CD14-positive monocyte (primary cell): ENCODE measurements at regions of chr3 and their contacts with region 1.

Region 1: DNA sequence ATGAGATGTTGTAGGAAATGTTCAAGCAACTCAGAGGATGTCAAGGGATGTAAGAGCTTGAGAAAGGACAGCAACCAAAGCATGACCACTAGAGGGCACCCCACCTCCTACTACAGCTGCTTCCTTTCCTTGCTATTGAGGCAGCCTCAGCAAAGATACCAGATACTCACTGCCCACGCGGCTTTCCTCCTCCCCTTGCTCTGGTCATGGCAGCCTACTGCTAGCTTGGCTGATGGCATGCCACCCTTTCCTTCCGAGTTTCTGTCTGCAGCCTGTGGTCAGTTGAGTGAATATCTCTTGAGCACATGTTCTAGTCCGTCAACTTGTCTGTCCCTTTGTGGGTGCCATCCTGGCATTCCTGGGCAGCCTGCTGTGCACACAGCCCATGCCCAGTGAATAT is 4.4 kb upstream of the CXCR6 start:
- DNase-seq: peak; percentile 77 to 85 (median 85)
- H3K4me3 ChIP-seq: no peak overlapping the region
- H3K4me3 Mint-ChIP-seq: no peak overlapping the region
- H3K27ac ChIP-seq: no peak overlapping the region
- H3K27ac Mint-ChIP-seq: no peak overlapping the region
- H3K4me1 ChIP-seq: peaks cover 0 to 2% of the 10 kb centered on the region in 2 donors
- H3K4me1 Mint-ChIP-seq: peaks cover 4% of the 10 kb centered on the region
- H3K27me3 ChIP-seq: no peaks in the 10 kb centered on the region
- H3K27me3 Mint-ChIP-seq: no peaks in the 10 kb centered on the region
- CTCF ChIP-seq: peak; percentile 88

Region 2: GRCh38 chr3:45817831-45818522 is 120.9 kb before region 1 on chr3:
- intact Hi-C with region 1: no loop called
- DNase-seq: no peak
- H3K4me3 ChIP-seq: no peak overlapping the region
- H3K4me3 Mint-ChIP-seq: no peak overlapping the region
- H3K27ac ChIP-seq: no peak overlapping the region
- H3K27ac Mint-ChIP-seq: no peak overlapping the region
- H3K4me1 ChIP-seq: no peaks in the 10 kb centered on the region
- H3K4me1 Mint-ChIP-seq: no peaks in the 10 kb centered on the region
- H3K27me3 ChIP-seq: no peaks in the 10 kb centered on the region
- H3K27me3 Mint-ChIP-seq: no peaks in the 10 kb centered on the region
- CTCF ChIP-seq: no peak

Region 3: GRCh38 chr3:46078712-46079400 is 140.0 kb after region 1 on chr3:
- intact Hi-C with region 1: loop called (anchors 2 kb)
- DNase-seq: peak; percentile 83 to 90 (median 89)
- H3K4me3 ChIP-seq: no peak overlapping the region
- H3K4me3 Mint-ChIP-seq: peak overlapping the region in 1 of 2 donors; percentile 76
- H3K27ac ChIP-seq: peak overlapping the region in 1 of 2 donors; percentile 12
- H3K27ac Mint-ChIP-seq: peak overlapping the region in 6 of 7 donors; percentile 11 to 65 (median 53)
- H3K4me1 ChIP-seq: peaks cover 3 to 7% of the 10 kb centered on the region in 2 donors
- H3K4me1 Mint-ChIP-seq: peaks cover 18% of the 10 kb centered on the region
- H3K27me3 ChIP-seq: no peaks in the 10 kb centered on the region
- H3K27me3 Mint-ChIP-seq: peaks cover 0 to 3% (median 0%) of the 10 kb centered on the region in 3 donors
- CTCF ChIP-seq: peak; percentile 99

Region 4: GRCh38 chr3:46228259-46229242 is 289.7 kb after region 1 on chr3:
- intact Hi-C with region 1: loop called in 1 of 2 experiments (anchors 10 kb)
- DNase-seq: peak; percentile 67 to 77 (median 69)
- H3K4me3 ChIP-seq: peak overlapping the region in 1 of 3 experiments; percentile 17
- H3K4me3 Mint-ChIP-seq: peak overlapping the region in 1 of 2 donors; percentile 44
- H3K27ac ChIP-seq: peak overlapping the region in 1 of 2 donors; percentile 30
- H3K27ac Mint-ChIP-seq: peak overlapping the region in 6 of 7 donors; percentile 15 to 88 (median 66)
- H3K4me1 ChIP-seq: peaks cover 28 to 33% of the 10 kb centered on the region in 2 donors
- H3K4me1 Mint-ChIP-seq: peaks cover 32% of the 10 kb centered on the region
- H3K27me3 ChIP-seq: no peaks in the 10 kb centered on the region
- H3K27me3 Mint-ChIP-seq: peaks cover 0 to 10% (median 0%) of the 10 kb centered on the region in 3 donors
- CTCF ChIP-seq: no peak

Region 5: DNA sequence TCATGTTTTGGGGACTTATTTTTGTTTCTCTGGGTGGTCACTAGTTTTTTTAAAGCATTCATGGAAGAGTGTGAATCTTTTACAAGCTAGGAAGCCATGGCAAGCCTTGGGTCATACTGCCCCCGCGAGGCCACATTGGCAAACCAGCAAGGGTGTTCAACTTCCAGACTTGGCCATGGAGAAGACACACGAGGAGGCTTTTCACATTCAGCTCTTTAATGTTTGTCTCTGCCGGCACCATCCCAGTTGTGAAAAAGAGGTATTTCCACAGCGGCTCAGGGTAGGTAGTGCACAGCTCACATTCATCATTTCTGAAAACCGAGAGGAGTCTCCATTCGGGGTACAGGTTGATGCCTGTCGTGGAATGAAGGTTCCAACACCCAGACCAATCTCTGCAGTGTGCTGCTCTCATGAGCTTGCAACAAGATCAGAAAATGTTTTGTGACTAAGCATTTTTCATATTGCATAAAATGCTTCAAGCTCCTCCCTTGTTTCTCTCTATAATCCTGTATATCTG is 439.6 kb after region 1 on chr3:
- intact Hi-C with region 1: loop called (anchors 5 kb)
- DNase-seq: peak; percentile 52 to 72 (median 68)
- H3K4me3 ChIP-seq: no peak overlapping the region
- H3K4me3 Mint-ChIP-seq: no peak overlapping the region
- H3K27ac ChIP-seq: no peak overlapping the region
- H3K27ac Mint-ChIP-seq: peak overlapping the region in 2 of 7 donors; percentile 59 to 63
- H3K4me1 ChIP-seq: peaks cover 18 to 21% of the 10 kb centered on the region in 2 donors
- H3K4me1 Mint-ChIP-seq: peaks cover 25% of the 10 kb centered on the region
- H3K27me3 ChIP-seq: no peaks in the 10 kb centered on the region
- H3K27me3 Mint-ChIP-seq: peaks cover 1 to 6% (median 4%) of the 10 kb centered on the region in 3 donors
- CTCF ChIP-seq: peak; percentile 78

Region 6: GRCh38 chr3:46442576-46443562 is 504.0 kb after region 1 on chr3:
- intact Hi-C with region 1: loop called in 1 of 2 experiments (anchors 10 kb)
- DNase-seq: peak; percentile 40 to 69 (median 60)
- H3K4me3 ChIP-seq: no peak overlapping the region
- H3K4me3 Mint-ChIP-seq: no peak overlapping the region
- H3K27ac ChIP-seq: no peak overlapping the region
- H3K27ac Mint-ChIP-seq: no peak overlapping the region
- H3K4me1 ChIP-seq: peaks cover 9 to 10% of the 10 kb centered on the region in 2 donors
- H3K4me1 Mint-ChIP-seq: peaks cover 25% of the 10 kb centered on the region
- H3K27me3 ChIP-seq: no peaks in the 10 kb centered on the region
- H3K27me3 Mint-ChIP-seq: peaks cover 0 to 2% (median under 1%) of the 10 kb centered on the region in 3 donors
- CTCF ChIP-seq: peak; percentile 88